Posterior vena cava (tissue), 2 donors: ENCODE measurements at regions of chr17 and their contacts with region 1.

Region 1: DNA sequence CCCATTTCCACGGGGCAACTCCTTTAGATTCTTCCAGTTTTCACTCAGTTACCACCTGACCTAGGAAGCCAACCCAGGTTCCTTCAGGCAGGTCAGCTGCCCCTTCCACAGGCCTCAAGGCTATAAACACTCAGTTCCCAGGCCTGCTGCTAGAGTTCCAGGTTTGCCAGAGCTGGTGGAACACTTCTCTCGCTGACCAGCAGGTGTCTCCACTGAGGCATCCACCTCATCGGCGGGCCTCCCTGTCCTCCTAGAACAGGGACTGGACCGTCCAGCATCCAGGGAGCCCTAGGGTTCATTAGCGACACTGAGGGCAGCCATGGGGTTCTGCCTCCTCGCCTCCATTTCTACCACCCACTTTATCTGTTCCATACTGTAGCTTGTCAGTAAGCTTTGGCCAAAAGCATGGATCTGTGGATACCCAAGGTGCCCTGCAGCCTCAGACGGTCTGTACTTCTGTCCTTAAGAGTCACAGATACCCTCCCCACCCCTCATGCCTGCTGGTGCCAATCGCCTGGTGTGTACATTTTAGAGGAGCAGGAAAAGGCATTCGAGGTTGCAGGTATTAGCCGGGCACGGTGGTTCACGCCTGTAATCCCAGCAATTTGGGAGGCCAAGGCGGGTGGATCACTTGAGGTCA is 29.0 kb downstream of the PIMREG start:
- DNase-seq: peak; percentile 92

Region 2: DNA sequence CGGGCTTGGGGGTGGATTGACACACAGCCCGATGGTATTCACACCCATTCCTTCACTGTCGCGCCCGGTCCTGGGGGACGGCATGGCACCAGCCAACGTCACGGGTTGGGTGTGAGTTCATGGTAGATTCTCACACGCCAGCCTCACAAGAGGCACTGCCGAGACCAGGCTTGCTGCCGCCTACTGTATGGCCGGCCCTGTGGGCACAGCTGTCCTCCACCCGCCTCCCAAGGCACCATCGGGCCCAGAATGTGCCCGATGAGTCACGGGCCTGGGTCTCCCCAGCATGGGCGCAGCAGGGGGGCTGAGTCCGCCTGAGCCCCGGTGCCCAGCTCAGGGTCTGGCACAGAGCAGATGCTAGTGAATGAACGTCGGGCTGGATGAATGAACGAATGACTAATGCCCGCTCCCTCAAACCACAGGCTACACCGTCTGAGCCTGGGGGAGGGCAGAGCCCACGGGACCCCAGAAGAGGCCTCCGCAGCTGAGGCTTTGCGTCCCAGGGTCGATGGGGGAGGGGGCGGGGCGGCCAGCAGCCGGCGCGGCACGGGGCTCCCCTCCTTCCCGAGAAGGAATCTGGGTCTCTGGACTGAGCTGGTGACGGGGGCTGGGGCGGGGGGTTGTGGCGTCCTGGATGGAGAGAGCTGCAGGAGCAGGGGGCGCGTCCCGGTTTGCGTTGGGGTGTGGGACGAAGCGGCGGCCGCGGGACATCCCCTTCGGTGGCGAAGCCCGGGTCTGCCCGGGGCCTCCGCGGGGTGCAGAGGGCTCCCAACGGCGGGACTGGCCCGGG is 82.3 kb after region 1 on chr17:
- intact Hi-C with region 1: loop called (anchors 5 to 10 kb)
- DNase-seq: no peak

Region 3: GRCh38 chr17:6599364-6599763 is 126.1 kb after region 1 on chr17:
- intact Hi-C with region 1: loop called in 1 of 2 experiments (anchors 10 kb)
- DNase-seq: no peak

Region 4: GRCh38 chr17:6640536-6641373 is 167.5 kb after region 1 on chr17 and contains the starts of genes KIAA0753 and TXNDC17:
- intact Hi-C with region 1: loop called (anchors 10 kb)
- DNase-seq: peak; percentile 98
- total RNA-seq, gene KIAA0753: 17.7 to 21.6 TPM
- total RNA-seq, gene TXNDC17: 43.2 to 55.9 TPM